Activated T-helper 1 cell treated with anti-CD3 and anti-CD28 coated beads, Interleukin-12 subunit alpha, Interleukin-12 subunit beta, Interleukin-2, Interleukin-4 antibody, amounts not matched to agents 30 ng/mL and 10 ng/mL and 1 ng/mL, durations not matched to agents 14 hours and 24 hours and 36 hours (primary cell): ENCODE measurements at regions of chr12 and their contacts with region 1.

Region 1: GRCh38 chr12:11906286-11906935 is 164.3 kb upstream of the BCL2L14 start:
- DNase-seq: no peak
- H3K4me3 Mint-ChIP-seq: peak overlapping the region; percentile 30
- H3K27ac Mint-ChIP-seq: peak overlapping the region; percentile 88
- H3K4me1 Mint-ChIP-seq: peaks cover 53% of the 10 kb centered on the region
- H3K27me3 Mint-ChIP-seq: no peaks in the 10 kb centered on the region

Region 2: DNA sequence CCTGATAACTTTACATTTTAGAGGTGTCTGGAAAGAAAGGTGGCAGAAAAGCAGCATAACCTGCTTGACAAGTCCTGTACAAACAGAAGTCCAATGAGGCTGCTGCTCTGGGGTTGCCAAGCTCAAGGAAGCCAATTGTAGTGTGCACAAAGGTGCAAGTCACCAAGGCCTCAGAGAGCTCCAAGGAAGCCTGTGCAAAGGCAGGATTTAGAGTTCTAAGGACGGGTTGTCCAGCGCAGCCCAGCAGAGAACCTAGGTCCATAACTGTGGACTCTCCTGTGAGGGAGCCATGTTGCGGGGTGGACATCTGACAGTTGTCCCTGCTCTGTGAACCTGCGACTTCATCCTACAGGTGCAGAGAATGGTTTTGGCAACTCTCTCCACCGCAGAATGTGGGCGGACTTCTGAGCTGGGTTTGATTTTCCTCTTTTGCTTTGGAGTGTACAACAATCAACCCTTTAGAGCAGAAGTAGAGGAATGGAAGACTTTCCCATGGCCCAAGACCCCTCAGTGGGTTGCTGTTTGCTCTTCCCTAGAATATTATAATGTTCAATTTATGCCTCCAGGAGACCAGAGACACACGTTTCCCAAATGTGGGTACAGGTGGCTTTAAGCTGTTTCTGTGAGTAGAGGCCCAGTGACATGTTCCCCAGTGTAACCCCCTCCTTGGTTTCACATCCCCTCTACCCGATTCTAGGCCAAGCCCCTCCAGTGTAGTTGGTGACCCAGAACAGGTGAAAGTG is 175.9 kb before region 1 on chr12:
- intact Hi-C with region 1: loop called (anchors 1 kb)
- DNase-seq: no peak
- H3K4me3 Mint-ChIP-seq: peak overlapping the region; percentile 66
- H3K27ac Mint-ChIP-seq: peak overlapping the region; percentile 86
- H3K4me1 Mint-ChIP-seq: peaks cover 93% of the 10 kb centered on the region
- H3K27me3 Mint-ChIP-seq: no peaks in the 10 kb centered on the region

Region 3: DNA sequence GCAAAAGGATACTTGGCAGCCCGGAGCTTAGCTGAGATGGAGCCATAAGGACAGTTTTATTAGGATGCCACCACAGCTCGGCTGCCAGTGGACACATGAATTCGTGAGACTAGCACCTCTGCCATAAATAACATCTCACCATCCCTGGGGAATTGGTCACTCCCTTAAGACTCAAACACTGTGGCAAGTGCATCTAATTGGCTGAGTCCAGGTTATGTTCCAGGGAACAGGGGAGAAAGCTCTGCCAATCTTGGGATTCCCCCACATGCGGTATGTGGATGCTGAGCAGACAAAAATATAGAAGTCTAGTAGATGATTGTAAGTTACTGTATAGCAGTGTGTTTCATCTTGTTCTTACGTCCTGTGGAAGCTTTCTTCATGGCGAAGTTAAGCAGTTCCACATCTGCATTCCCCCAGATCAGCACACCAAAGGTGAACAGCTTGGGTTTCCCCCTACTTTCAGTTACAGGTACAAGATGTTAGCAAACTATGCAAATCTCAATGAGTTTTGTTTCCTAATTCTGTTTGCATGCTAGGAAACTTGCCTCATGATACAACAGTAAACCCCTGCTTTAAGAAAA is 125.8 kb before region 1 on chr12:
- intact Hi-C with region 1: loop called (anchors 1 kb)
- DNase-seq: no peak
- H3K4me3 Mint-ChIP-seq: no peak overlapping the region
- H3K27ac Mint-ChIP-seq: peak overlapping the region; percentile 90
- H3K4me1 Mint-ChIP-seq: peaks cover 85% of the 10 kb centered on the region
- H3K27me3 Mint-ChIP-seq: no peaks in the 10 kb centered on the region

Region 4: DNA sequence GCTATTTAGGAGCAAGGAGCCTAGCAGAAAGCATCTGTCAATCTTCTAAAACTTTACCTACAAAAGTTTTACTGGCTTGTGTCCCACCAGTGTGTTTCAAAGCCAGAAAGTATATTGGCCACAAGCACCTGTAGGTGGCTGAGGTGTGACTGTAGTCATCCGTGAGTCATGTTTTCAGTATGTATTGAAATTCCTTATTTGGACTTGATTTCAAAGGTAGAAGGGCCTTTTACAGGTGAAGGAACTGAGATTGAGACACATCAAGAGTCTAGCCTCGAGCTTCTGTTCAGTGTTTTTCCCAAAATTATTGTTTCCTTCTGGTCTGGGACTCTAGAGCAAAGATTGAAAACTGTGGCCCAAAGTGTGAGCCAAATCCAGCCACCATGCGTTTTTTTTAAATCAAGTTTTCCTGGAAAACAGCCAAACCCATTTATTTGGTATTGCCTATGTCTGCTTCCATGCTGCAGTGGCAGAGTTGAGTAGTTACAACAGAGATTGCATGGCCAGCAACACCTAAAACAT is 30.9 kb before region 1 on chr12:
- intact Hi-C with region 1: loop called (anchors 1 kb)
- DNase-seq: no peak
- H3K4me3 Mint-ChIP-seq: peak overlapping the region; percentile 9
- H3K27ac Mint-ChIP-seq: peak overlapping the region; percentile 61
- H3K4me1 Mint-ChIP-seq: peaks cover 73% of the 10 kb centered on the region
- H3K27me3 Mint-ChIP-seq: no peaks in the 10 kb centered on the region

Region 5: GRCh38 chr12:12032851-12033588 is 126.6 kb after region 1 on chr12:
- intact Hi-C with region 1: loop called (anchors 1 kb)
- DNase-seq: peak; percentile 57
- H3K4me3 Mint-ChIP-seq: peak overlapping the region; percentile 83
- H3K27ac Mint-ChIP-seq: peak overlapping the region; percentile 97
- H3K4me1 Mint-ChIP-seq: peaks cover 74% of the 10 kb centered on the region
- H3K27me3 Mint-ChIP-seq: no peaks in the 10 kb centered on the region